ENCODE measurements at regions of chr4 and their contacts with region 1.

Region 1: GRCh38 chr4:70839589-70840093 is at the start of gene GRSF1:
- DNase-seq: peak; percentile 79 to 98 (median 94)
- ATAC-seq: peak; percentile 96
- H3K4me3 ChIP-seq: peak within 1 kb of the TSS; percentile 83 to 84
- H3K27ac ChIP-seq: peak within 1 kb of the TSS; percentile 93
- H3K4me1 ChIP-seq: peaks cover 4 to 31% of the 10 kb centered on the region in 2 donors
- H3K27me3 ChIP-seq: no peaks in the 10 kb centered on the region
- CTCF ChIP-seq: no peak
- polyA plus RNA-seq, gene GRSF1: 126 to 143 (median 131) TPM

Region 2: DNA sequence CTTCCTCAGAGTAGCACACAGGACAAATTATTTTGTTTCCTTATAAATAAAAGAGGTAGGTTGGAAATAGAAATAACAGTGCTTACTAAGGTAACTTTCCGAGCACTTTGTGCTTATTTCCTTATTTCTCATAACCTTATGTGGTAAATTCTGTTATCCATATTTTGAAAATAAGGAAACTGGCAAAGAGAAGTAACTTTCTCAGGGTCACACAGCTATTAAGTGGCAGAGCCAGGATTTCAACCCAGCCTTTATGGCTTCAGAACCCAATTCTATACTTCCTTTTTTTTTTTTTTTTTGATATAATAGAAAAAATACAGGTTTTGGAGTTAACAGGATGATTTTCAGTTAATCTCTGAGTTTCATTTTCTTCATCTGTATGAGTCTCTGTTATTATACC is 148.0 kb before region 1 on chr4:
- intact Hi-C with region 1: loop called in 1 of 2 experiments (anchors 5 kb)
- DNase-seq: no peak
- ATAC-seq: no peak
- H3K4me3 ChIP-seq: peak overlapping the region in 1 of 2 donors; percentile 1
- H3K27ac ChIP-seq: peak overlapping the region in 1 of 2 donors; percentile 2
- H3K4me1 ChIP-seq: peaks cover 10 to 43% of the 10 kb centered on the region in 2 donors
- H3K27me3 ChIP-seq: no peaks in the 10 kb centered on the region
- CTCF ChIP-seq: no peak

Region 3: GRCh38 chr4:71171592-71171991 is 332.0 kb after region 1 on chr4:
- intact Hi-C with region 1: no loop called
- DNase-seq: no peak
- ATAC-seq: no peak
- H3K4me3 ChIP-seq: no peak overlapping the region
- H3K27ac ChIP-seq: no peak overlapping the region
- H3K4me1 ChIP-seq: no peaks in the 10 kb centered on the region
- H3K27me3 ChIP-seq: no peaks in the 10 kb centered on the region
- CTCF ChIP-seq: no peak

Measured in left lung (tissue), 14 donors.